ENCODE measurements at regions of chr2 and their contacts with region 1.

Region 1: DNA sequence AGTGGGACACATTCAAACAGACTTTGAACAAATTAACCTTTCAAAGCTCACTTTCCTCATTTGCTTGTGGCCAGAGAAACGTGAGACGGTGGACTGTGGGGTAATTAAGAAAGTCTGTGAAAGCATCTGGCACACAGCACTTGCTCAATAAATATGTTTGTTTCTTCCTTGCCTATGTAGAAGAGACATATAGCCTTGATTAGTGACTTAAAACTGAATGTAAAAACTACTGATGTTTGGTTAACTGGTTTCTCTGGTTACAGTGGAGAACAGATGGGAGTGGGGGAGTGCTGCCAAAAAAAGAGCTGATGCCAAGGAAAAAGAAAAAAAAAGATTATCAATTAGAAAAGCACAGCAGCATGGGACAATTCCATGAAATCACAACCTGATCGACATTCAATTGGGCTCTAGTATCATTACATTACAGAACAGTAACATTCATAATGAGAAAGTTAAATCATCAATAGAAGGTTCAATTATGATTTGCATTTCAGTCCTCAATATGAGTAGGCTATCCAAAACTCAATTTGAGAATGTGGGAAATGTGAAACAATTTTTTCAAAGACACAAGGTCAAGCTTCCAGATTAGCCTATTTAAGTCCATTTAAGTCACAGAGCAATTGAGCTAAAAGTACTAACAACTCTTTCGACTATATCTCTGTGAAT is 14.7 kb downstream of the CUL3 start:
- DNase-seq: no peak
- ATAC-seq: peak; percentile 41
- H3K4me3 ChIP-seq: no peak overlapping the region
- H3K27ac ChIP-seq: no peak overlapping the region
- H3K4me1 ChIP-seq: peaks cover 7% of the 10 kb centered on the region; the same call in 1 of the 2 replicates
- H3K27me3 ChIP-seq: no peaks in the 10 kb centered on the region
- CTCF ChIP-seq: no peak
- EP300 ChIP-seq: no peak
- POLR2A ChIP-seq: no peak
- RAD21 ChIP-seq: no peak

Region 2: DNA sequence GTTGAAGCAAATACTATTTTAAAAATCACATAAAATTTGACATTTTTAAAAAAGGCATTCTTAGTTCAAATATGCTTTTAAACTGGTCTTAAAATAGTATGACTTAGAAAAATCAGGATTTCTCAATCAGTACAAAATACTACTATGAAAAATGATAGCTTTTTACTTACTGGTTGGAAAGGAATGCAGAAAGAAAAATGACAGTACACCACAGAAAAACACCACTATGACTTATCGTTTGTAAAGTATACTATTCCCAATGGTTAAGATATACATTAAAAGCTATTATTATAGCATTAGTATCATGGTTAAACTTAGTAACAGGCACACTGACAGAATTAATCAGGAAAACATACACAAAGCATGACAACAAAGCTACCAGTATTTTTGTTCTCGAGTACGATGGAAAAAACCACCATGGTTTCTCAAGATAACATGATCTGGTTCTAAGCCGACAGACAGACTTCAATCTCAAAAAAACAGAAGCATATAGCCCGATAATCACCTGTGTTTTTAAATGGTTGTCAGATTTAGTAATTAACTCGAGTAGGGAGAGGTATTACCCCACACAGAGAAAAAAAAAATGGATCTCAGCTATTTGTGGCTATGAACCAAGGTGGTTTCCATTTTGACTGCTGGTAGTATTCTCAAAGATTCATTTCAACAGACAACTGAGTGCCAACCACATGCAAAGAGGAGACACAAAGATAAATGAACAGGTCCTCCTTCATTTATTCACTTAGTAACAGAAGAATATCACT is 24.4 kb before region 1 on chr2:
- CTCF ChIA-PET with region 1: no interaction called
- POLR2A ChIA-PET with region 1: interaction called, 3 read pairs
- RAD21 ChIA-PET with region 1: interaction called, 6 read pairs
- SMC1A ChIA-PET with region 1: interaction called, 13 read pairs
- in situ Hi-C with region 1: no loop called
- intact Hi-C with region 1: no loop called
- DNase-seq: no peak
- ATAC-seq: peak; percentile 83
- H3K4me3 ChIP-seq: no peak overlapping the region
- H3K27ac ChIP-seq: no peak overlapping the region; the same call in 1 of the 2 replicates
- H3K4me1 ChIP-seq: peaks cover 3% of the 10 kb centered on the region; the same call in 1 of the 2 replicates
- H3K27me3 ChIP-seq: no peaks in the 10 kb centered on the region
- CTCF ChIP-seq: no peak
- EP300 ChIP-seq: peak in 1 of 2 experiments; percentile 26; a peak in 1 of 4 replicates
- POLR2A ChIP-seq: no peak
- RAD21 ChIP-seq: no peak

Region 3: DNA sequence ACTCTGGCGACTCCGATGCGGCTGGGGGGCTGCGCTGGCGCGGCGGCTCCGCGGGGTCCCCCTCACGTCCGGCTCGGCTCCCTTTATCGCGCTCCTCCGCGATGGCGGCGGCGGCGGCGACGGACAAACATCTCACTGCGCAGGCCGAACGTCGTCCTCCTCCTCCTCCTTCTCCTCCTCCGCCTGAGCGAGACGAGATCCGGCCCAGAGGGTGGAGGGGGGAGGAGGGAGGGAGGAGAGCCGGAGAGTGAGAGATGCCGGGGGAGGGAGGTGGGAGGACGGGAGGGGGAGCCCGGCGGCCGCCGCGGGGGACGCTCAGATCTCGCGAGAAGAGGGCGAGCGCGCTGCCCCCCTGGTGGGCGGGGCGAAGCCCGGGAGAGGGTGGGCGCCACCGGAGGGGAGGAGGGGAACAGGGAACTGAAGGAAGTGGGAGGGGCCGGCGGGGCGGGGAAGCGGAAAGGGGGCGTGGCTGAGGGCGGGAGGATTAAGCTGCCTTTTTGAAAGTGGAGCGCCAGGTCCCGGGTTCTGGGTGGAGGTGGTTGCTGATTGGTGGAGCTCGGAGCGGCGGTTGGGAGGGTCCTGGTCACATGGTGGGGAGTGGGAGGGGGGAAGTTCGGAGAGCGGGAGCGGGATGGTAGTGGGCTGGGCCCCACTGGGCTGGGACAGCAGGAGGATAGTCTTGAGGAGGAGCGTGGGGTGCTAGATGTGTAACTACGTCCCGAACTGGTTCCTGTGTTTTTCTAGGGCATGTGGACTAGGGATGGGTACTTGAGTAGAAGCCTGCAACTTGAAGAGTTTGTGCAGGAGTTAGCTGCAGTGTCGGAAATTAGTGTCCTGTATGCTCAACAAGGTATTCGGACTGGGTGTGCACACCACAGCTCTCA is 15.0 kb after region 1 on chr2 and contains the start of gene CUL3:
- CTCF ChIA-PET with region 1: interaction called, 4 read pairs
- POLR2A ChIA-PET with region 1: interaction called, 20 read pairs
- RAD21 ChIA-PET with region 1: interaction called, 11 read pairs
- SMC1A ChIA-PET with region 1: interaction called, 95 read pairs
- in situ Hi-C with region 1: no loop called
- intact Hi-C with region 1: no loop called
- DNase-seq: peak; percentile 90
- ATAC-seq: peak; percentile 88
- H3K4me3 ChIP-seq: peak within 1 kb of the TSS; percentile 96
- H3K27ac ChIP-seq: peak within 1 kb of the TSS; percentile 88
- H3K4me1 ChIP-seq: no peaks in the 10 kb centered on the region
- H3K27me3 ChIP-seq: no peaks in the 10 kb centered on the region
- CTCF ChIP-seq: no peak
- EP300 ChIP-seq: 0 out of 4 replicates have a peak, but pooled peaks of 1 of the 2 experiments have one; percentile 10
- POLR2A ChIP-seq: peak; percentile 90
- RAD21 ChIP-seq: no peak
- polyA plus RNA-seq, gene CUL3: 49.0 to 71.9 TPM

Measured in GM12878 (cell line).